ENCODE measurements at regions of chr20 and their contacts with region 1.

Region 1: DNA sequence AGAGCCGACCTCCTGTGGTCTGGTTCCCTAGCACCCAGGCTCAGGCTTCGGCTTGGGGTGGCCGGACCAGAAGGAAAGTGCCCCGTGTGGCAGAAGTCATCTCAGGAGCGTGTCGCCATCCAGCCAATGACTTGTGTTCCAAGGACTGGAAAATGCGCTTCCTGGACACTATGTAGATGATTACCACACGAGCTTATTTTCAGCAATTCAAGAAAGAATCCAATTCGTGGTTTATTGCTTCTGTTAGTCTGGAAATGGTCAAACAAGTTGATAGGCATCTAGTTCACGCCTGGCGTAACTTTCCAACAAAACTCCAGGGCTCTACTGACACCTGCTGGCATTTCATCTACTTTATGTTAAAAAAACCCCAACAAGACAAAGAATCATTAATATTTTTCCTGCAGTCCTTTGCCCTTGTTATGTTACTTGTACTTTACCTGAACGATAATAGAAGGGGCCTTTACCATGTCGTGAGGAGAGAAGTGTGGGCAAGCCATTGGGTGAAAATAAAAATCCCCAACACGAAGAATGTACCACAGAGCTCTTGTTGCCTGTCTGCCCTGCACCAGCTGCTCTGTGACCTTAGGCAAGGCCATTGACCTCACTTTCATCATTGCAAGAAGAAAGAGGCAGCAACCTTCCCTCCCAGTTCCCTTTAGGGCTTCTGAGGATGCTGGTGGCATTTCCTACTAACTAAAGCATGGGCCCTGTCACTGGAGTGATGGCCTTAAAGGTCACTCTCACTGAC is 154.7 kb upstream of the LAMP5 start:
- DNase-seq: peak in 2 of 4 donors; percentile 46 to 70
- ATAC-seq: peak; percentile 70
- H3K4me3 ChIP-seq: no peak overlapping the region
- H3K27ac ChIP-seq: no peak overlapping the region
- H3K4me1 ChIP-seq: peaks cover 0 to 14% of the 10 kb centered on the region in 2 donors
- H3K27me3 ChIP-seq: no peaks in the 10 kb centered on the region
- CTCF ChIP-seq: peak in 1 of 2 donors; percentile 21

Region 2: DNA sequence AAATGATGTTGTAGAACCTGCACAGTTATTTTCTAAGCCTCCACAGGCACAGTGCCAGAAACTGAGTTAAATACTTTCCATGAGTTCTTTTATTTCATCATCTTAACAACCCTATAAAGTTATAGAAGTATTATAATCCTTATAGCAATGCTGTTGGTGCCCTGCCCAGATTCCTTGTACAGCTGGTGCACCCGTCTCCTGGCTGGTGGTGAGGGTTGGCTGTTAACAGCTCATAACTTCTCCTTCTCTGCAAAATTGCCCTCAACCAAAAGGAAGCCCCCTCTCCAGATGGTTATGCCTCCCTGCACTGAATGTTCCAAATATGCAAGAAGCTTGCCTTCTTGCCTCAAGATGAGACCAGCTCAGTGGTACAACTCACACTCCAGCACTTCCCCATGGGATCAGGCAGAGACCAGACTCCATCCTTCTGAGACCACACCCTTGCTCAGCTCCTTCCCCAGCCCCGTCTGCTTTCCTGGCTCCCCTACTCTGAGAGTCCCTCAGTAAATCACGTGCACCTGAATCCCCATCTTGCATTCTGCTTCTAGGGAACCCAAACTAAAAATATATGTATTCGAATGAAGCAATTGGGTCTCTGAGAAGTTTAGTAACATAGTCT is 595.3 kb before region 1 on chr20:
- intact Hi-C with region 1: loop called in 1 of 2 experiments (anchors 10 kb)
- DNase-seq: no peak
- ATAC-seq: no peak
- H3K4me3 ChIP-seq: no peak overlapping the region
- H3K27ac ChIP-seq: no peak overlapping the region
- H3K4me1 ChIP-seq: no peaks in the 10 kb centered on the region
- H3K27me3 ChIP-seq: no peaks in the 10 kb centered on the region
- CTCF ChIP-seq: no peak

Region 3: GRCh38 chr20:8790442-8791074 is 569.2 kb before region 1 on chr20:
- intact Hi-C with region 1: loop called in 1 of 2 experiments (anchors 10 kb)
- DNase-seq: peak in 2 of 4 donors; percentile 13 to 58
- ATAC-seq: peak; percentile 70
- H3K4me3 ChIP-seq: no peak overlapping the region
- H3K27ac ChIP-seq: no peak overlapping the region
- H3K4me1 ChIP-seq: no peaks in the 10 kb centered on the region
- H3K27me3 ChIP-seq: no peaks in the 10 kb centered on the region
- CTCF ChIP-seq: peak; percentile 65 to 96

Region 4: GRCh38 chr20:9442858-9443257 is 83.1 kb after region 1 on chr20:
- intact Hi-C with region 1: no loop called
- DNase-seq: no peak
- ATAC-seq: no peak
- H3K4me3 ChIP-seq: no peak overlapping the region
- H3K27ac ChIP-seq: no peak overlapping the region
- H3K4me1 ChIP-seq: no peaks in the 10 kb centered on the region
- H3K27me3 ChIP-seq: no peaks in the 10 kb centered on the region
- CTCF ChIP-seq: no peak